ENCODE measurements at regions of chr5 and their contacts with region 1.

Region 1: GRCh38 chr5:152142840-152143469 is 218.3 kb upstream of the GLRA1 start:
- DNase-seq: peak; percentile 13
- H3K4me3 ChIP-seq: no peak overlapping the region
- H3K27ac ChIP-seq: no peak overlapping the region
- H3K4me1 ChIP-seq: no peaks in the 10 kb centered on the region
- H3K27me3 ChIP-seq: no peaks in the 10 kb centered on the region
- CTCF ChIP-seq: peak; percentile 87 to 92 (median 88)

Region 2: GRCh38 chr5:151825445-151825844 is 317.5 kb before region 1 on chr5:
- dilution Hi-C with region 1: loop called (anchors 25 kb)
- DNase-seq: no peak
- H3K4me3 ChIP-seq: no peak overlapping the region
- H3K27ac ChIP-seq: no peak overlapping the region
- H3K4me1 ChIP-seq: no peaks in the 10 kb centered on the region
- H3K27me3 ChIP-seq: no peaks in the 10 kb centered on the region
- CTCF ChIP-seq: peak; percentile 81 to 93 (median 82)

Measured in keratinocyte (primary cell).